Common myeloid progenitor, CD34-positive (primary cell): ENCODE measurements at regions of chr20 and their contacts with region 1.

Region 1: GRCh38 chr20:2451939-2452732 is 18.5 kb downstream of the SNRPB start:
- DNase-seq: peak; percentile 50 to 79 (median 68)
- H3K4me3 ChIP-seq: no peak overlapping the region
- H3K27ac ChIP-seq: no peak overlapping the region
- H3K4me1 ChIP-seq: peaks cover 0 to 11% (median 4%) of the 10 kb centered on the region in 4 experiments
- H3K27me3 ChIP-seq: peaks cover 0 to 7% (median 0%) of the 10 kb centered on the region in 5 experiments

Region 2: DNA sequence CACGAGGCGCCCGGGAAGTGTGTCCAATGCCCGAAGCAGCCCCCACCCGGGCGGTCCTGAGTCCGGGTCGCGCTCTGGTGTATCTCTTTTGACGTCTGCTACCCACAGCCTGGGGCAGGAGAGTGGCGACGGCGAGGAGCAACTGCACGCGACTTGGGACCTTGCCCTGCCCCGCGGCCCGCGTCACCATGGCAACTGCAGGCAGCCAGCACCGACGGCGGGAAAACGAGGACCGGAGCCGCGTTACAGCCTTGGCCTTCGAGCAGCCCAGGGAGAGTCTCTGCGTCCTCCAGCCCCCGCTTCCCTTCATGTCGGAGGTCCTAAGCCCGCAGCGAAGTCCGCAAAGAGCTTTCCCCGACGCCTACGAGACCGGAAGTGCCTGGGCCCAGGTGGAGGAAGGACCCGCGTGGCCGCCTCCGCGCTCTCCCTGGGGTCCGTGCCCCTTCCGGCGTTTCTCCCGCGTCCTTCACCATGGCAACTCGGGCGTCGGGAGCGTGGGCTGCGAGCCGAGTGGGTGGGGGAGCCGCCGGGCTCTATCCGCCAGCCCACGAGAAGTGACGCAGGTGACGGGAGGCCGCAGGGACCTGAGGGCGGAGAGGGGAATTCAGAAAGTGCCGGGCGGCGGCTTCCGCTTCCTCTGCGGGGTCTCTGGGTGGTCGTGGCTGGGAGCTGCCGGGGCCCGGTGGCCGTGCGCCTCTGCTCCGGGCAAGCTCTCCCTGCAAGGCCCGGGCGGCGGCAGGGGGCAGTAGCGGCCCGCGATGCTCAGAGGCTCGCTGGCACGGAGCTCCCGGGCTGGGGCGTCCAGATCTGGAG is 245.0 kb before region 1 on chr20:
- CTCF ChIA-PET with region 1: interaction called, 20 read pairs
- POLR2A ChIA-PET with region 1: no interaction called
- DNase-seq: peak; percentile 50 to 77 (median 69)
- H3K4me3 ChIP-seq: peak overlapping the region; percentile 31 to 74 (median 66)
- H3K27ac ChIP-seq: no peak overlapping the region
- H3K4me1 ChIP-seq: peaks cover 0 to 17% (median 12%) of the 10 kb centered on the region in 4 experiments
- H3K27me3 ChIP-seq: peaks cover 2 to 71% (median 18%) of the 10 kb centered on the region in 5 experiments

Region 3: GRCh38 chr20:2349818-2350508 is 102.2 kb before region 1 on chr20:
- CTCF ChIA-PET with region 1: interaction called, 25 read pairs
- POLR2A ChIA-PET with region 1: no interaction called
- DNase-seq: no peak
- H3K4me3 ChIP-seq: no peak overlapping the region
- H3K27ac ChIP-seq: no peak overlapping the region
- H3K4me1 ChIP-seq: peaks cover 0 to 2% (median 0%) of the 10 kb centered on the region in 4 experiments
- H3K27me3 ChIP-seq: peaks cover 0 to 45% (median 8%) of the 10 kb centered on the region in 5 experiments

Region 4: GRCh38 chr20:2379511-2380229 is 72.5 kb before region 1 on chr20:
- CTCF ChIA-PET with region 1: no interaction called
- POLR2A ChIA-PET with region 1: no interaction called
- DNase-seq: peak; percentile 66 to 87 (median 84)
- H3K4me3 ChIP-seq: no peak overlapping the region
- H3K27ac ChIP-seq: no peak overlapping the region
- H3K4me1 ChIP-seq: peaks cover 0 to 11% (median 8%) of the 10 kb centered on the region in 4 experiments
- H3K27me3 ChIP-seq: peaks cover 0 to 85% (median 23%) of the 10 kb centered on the region in 5 experiments

Region 5: GRCh38 chr20:2463616-2464365 is 11.7 kb after region 1 on chr20:
- CTCF ChIA-PET with region 1: interaction called, 12 read pairs
- POLR2A ChIA-PET with region 1: no interaction called
- DNase-seq: no peak
- H3K4me3 ChIP-seq: no peak overlapping the region
- H3K27ac ChIP-seq: no peak overlapping the region
- H3K4me1 ChIP-seq: peaks cover 2 to 11% (median 5%) of the 10 kb centered on the region in 4 experiments
- H3K27me3 ChIP-seq: no peaks in the 10 kb centered on the region

Region 6: DNA sequence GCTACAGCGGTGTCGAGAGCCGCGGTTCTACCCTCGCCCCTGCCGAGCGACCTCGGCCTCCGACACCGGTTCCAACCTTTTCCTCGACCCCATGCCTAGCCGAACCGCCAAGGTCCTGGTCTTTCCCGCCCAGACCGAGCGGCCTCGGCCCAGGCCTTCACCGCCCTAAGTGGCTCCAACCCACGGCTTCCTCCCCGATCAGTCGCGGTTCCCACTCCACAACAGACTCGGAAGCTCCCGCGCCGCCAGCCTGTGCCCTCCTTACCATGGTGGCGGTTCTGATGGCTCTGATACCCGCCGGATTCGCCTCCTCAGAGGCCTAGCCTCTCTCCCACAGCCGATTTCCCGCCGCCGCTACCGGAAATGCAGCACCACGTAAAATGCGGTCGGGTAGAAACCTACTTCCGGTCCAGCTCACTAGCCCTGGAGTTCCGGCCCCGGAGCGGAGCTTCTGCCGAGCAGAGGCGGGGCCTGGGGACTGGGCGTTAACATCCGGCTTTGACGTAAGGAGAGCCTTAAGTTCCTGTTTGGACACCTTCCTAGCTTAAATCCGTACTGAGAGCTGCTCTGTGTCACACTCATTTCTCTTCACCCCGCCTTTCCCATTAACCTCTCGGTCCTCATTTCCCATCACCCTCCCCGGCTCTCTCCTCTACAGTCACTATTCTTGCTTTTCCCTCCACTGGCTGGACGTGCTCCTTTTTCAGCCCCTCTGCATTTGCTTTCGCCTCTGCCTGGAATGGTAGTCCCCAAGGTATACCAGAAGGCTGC is 18.5 kb after region 1 on chr20 and contains the start of gene SNRPB:
- CTCF ChIA-PET with region 1: interaction called, 12 read pairs
- POLR2A ChIA-PET with region 1: no interaction called
- DNase-seq: peak; percentile 99
- H3K4me3 ChIP-seq: peak within 1 kb of the TSS; percentile 70 to 97 (median 91)
- H3K27ac ChIP-seq: peak within 1 kb of the TSS; percentile 90 to 95
- H3K4me1 ChIP-seq: peaks cover 8 to 26% (median 21%) of the 10 kb centered on the region in 4 experiments
- H3K27me3 ChIP-seq: no peaks in the 10 kb centered on the region